Naive thymus-derived CD4-positive, alpha-beta T cell (primary cell): ENCODE measurements at regions of chr10 and their contacts with region 1.

Region 1: GRCh38 chr10:59625721-59626522 is 83.7 kb downstream of the SLC16A9 start:
- DNase-seq: peak in 8 of 9 donors; percentile 28 to 73 (median 64)
- ATAC-seq: peak; percentile 84
- H3K4me3 ChIP-seq: no peak overlapping the region
- H3K4me3 Mint-ChIP-seq: no peak overlapping the region
- H3K27ac ChIP-seq: no peak overlapping the region
- H3K27ac Mint-ChIP-seq: peak overlapping the region in 1 of 9 donors; percentile 32
- H3K4me1 ChIP-seq: no peaks in the 10 kb centered on the region
- H3K4me1 Mint-ChIP-seq: peaks cover 0 to 7% (median 3%) of the 10 kb centered on the region in 7 donors
- H3K27me3 ChIP-seq: no peaks in the 10 kb centered on the region
- H3K27me3 Mint-ChIP-seq: peaks cover 0 to 21% (median 1%) of the 10 kb centered on the region in 5 donors

Region 2: GRCh38 chr10:59240582-59241183 is 385.2 kb before region 1 on chr10:
- CTCF ChIA-PET with region 1: no interaction called
- POLR2A ChIA-PET with region 1: no interaction called
- intact Hi-C with region 1: loop called in 1 of 2 experiments (anchors 2 kb)
- DNase-seq: no peak
- ATAC-seq: no peak
- H3K4me3 ChIP-seq: no peak overlapping the region
- H3K4me3 Mint-ChIP-seq: no peak overlapping the region
- H3K27ac ChIP-seq: no peak overlapping the region
- H3K27ac Mint-ChIP-seq: no peak overlapping the region
- H3K4me1 ChIP-seq: no peaks in the 10 kb centered on the region
- H3K4me1 Mint-ChIP-seq: no peaks in the 10 kb centered on the region
- H3K27me3 ChIP-seq: no peaks in the 10 kb centered on the region
- H3K27me3 Mint-ChIP-seq: peaks cover 0 to 6% (median 0%) of the 10 kb centered on the region in 5 donors

Region 3: GRCh38 chr10:59479426-59479825 is 146.5 kb before region 1 on chr10:
- CTCF ChIA-PET with region 1: no interaction called
- POLR2A ChIA-PET with region 1: no interaction called
- intact Hi-C with region 1: no loop called
- DNase-seq: no peak
- ATAC-seq: no peak
- H3K4me3 ChIP-seq: no peak overlapping the region
- H3K4me3 Mint-ChIP-seq: no peak overlapping the region
- H3K27ac ChIP-seq: no peak overlapping the region
- H3K27ac Mint-ChIP-seq: no peak overlapping the region
- H3K4me1 ChIP-seq: no peaks in the 10 kb centered on the region
- H3K4me1 Mint-ChIP-seq: no peaks in the 10 kb centered on the region
- H3K27me3 ChIP-seq: no peaks in the 10 kb centered on the region
- H3K27me3 Mint-ChIP-seq: no peaks in the 10 kb centered on the region

Region 4: GRCh38 chr10:59830601-59831259 is 204.8 kb after region 1 on chr10:
- CTCF ChIA-PET with region 1: interaction called, 3 read pairs
- POLR2A ChIA-PET with region 1: no interaction called
- intact Hi-C with region 1: loop called (anchors 1 kb)
- DNase-seq: peak in 2 of 9 donors; percentile 8 to 18
- ATAC-seq: peak; percentile 64
- H3K4me3 ChIP-seq: no peak overlapping the region
- H3K4me3 Mint-ChIP-seq: no peak overlapping the region
- H3K27ac ChIP-seq: no peak overlapping the region
- H3K27ac Mint-ChIP-seq: no peak overlapping the region
- H3K4me1 ChIP-seq: no peaks in the 10 kb centered on the region
- H3K4me1 Mint-ChIP-seq: peaks cover 32 to 63% (median 48%) of the 10 kb centered on the region in 7 donors
- H3K27me3 ChIP-seq: no peaks in the 10 kb centered on the region
- H3K27me3 Mint-ChIP-seq: no peaks in the 10 kb centered on the region

Region 5: GRCh38 chr10:60032723-60033122 is 406.8 kb after region 1 on chr10:
- CTCF ChIA-PET with region 1: interaction called, 6 read pairs
- POLR2A ChIA-PET with region 1: no interaction called
- intact Hi-C with region 1: loop called in 1 of 2 experiments (anchors 1 kb)
- DNase-seq: peak in 7 of 9 donors; percentile 5 to 31 (median 12)
- ATAC-seq: peak; percentile 86
- H3K4me3 ChIP-seq: no peak overlapping the region
- H3K4me3 Mint-ChIP-seq: no peak overlapping the region
- H3K27ac ChIP-seq: no peak overlapping the region
- H3K27ac Mint-ChIP-seq: peak overlapping the region in 1 of 9 donors; percentile 32
- H3K4me1 ChIP-seq: no peaks in the 10 kb centered on the region
- H3K4me1 Mint-ChIP-seq: peaks cover 0 to 9% (median 0%) of the 10 kb centered on the region in 7 donors
- H3K27me3 ChIP-seq: no peaks in the 10 kb centered on the region
- H3K27me3 Mint-ChIP-seq: no peaks in the 10 kb centered on the region

Region 6: GRCh38 chr10:60434418-60435046 is 808.6 kb after region 1 on chr10:
- CTCF ChIA-PET with region 1: no interaction called
- POLR2A ChIA-PET with region 1: no interaction called
- intact Hi-C with region 1: loop called in 1 of 2 experiments (anchors 1 kb)
- DNase-seq: peak in 2 of 9 donors; percentile 6 to 9
- ATAC-seq: no peak
- H3K4me3 ChIP-seq: no peak overlapping the region
- H3K4me3 Mint-ChIP-seq: no peak overlapping the region
- H3K27ac ChIP-seq: no peak overlapping the region
- H3K27ac Mint-ChIP-seq: no peak overlapping the region
- H3K4me1 ChIP-seq: no peaks in the 10 kb centered on the region
- H3K4me1 Mint-ChIP-seq: peaks cover 0 to 16% (median 10%) of the 10 kb centered on the region in 7 donors
- H3K27me3 ChIP-seq: no peaks in the 10 kb centered on the region
- H3K27me3 Mint-ChIP-seq: no peaks in the 10 kb centered on the region

Region 7: GRCh38 chr10:60769406-60769805 is 1143.5 kb after region 1 on chr10:
- CTCF ChIA-PET with region 1: no interaction called
- POLR2A ChIA-PET with region 1: no interaction called
- intact Hi-C with region 1: loop called (anchors 1 to 10 kb)
- DNase-seq: no peak
- ATAC-seq: no peak
- H3K4me3 ChIP-seq: no peak overlapping the region
- H3K4me3 Mint-ChIP-seq: no peak overlapping the region
- H3K27ac ChIP-seq: no peak overlapping the region
- H3K27ac Mint-ChIP-seq: no peak overlapping the region
- H3K4me1 ChIP-seq: no peaks in the 10 kb centered on the region
- H3K4me1 Mint-ChIP-seq: peaks cover 0 to 20% (median 14%) of the 10 kb centered on the region in 7 donors
- H3K27me3 ChIP-seq: no peaks in the 10 kb centered on the region
- H3K27me3 Mint-ChIP-seq: peaks cover 0 to 6% (median 0%) of the 10 kb centered on the region in 5 donors